Transverse colon (tissue), 4 donors: ENCODE measurements at regions of chr13 and their contacts with region 1.

Region 1: DNA sequence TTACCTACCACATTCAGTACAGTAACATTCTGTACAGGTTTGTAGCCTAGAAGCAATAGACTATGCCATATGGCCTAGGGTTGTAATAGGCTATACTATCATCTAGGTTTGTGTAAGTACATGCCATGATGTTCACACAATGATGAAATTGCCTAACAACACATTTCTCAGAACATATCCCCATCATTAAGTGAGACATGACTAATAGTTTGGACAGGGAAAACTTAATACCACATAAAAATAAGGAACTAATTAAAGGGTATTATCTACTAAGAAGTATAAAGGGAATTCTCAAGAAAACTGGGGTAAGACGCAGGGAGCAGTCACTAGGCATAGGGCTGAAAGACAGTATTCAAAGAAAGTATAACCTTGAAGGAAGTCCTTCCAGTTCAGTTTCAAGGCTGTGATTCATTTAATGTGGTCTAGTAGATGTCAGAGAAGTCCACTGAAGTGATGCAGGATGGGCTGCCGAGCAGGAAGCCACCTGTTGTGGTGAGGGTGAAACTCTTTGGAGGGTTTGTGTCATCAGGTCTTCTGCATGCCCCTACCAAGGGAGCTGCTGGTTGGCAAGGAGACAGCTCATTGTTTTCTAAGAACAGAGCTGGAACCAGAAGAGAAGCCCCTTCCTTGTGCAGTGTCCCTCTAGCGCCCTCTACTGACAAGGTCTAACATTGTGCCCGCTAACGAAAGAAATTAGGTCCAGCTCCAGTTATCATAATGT is 122.9 kb downstream of the OLFM4 start:
- DNase-seq: peak; percentile 44
- H3K4me3 ChIP-seq: no peak overlapping the region
- H3K27ac ChIP-seq: no peak overlapping the region
- H3K4me1 ChIP-seq: no peaks in the 10 kb centered on the region
- H3K27me3 ChIP-seq: peaks cover 4% of the 10 kb centered on the region
- CTCF ChIP-seq: peak; percentile 58 to 73 (median 68)
- EP300 ChIP-seq: no peak
- POLR2A ChIP-seq: no peak

Region 2: GRCh38 chr13:53112525-53112924 is 39.0 kb before region 1 on chr13:
- in situ Hi-C with region 1: no loop called
- intact Hi-C with region 1: loop called (anchors 2 kb)
- DNase-seq: no peak
- H3K4me3 ChIP-seq: no peak overlapping the region
- H3K27ac ChIP-seq: no peak overlapping the region
- H3K4me1 ChIP-seq: no peaks in the 10 kb centered on the region
- H3K27me3 ChIP-seq: no peaks in the 10 kb centered on the region
- CTCF ChIP-seq: no peak
- EP300 ChIP-seq: no peak
- POLR2A ChIP-seq: no peak

Region 3: GRCh38 chr13:53167561-53167960 is 16.1 kb after region 1 on chr13:
- in situ Hi-C with region 1: no loop called
- intact Hi-C with region 1: no loop called
- DNase-seq: no peak
- H3K4me3 ChIP-seq: no peak overlapping the region
- H3K27ac ChIP-seq: no peak overlapping the region
- H3K4me1 ChIP-seq: no peaks in the 10 kb centered on the region
- H3K27me3 ChIP-seq: no peaks in the 10 kb centered on the region
- CTCF ChIP-seq: no peak
- EP300 ChIP-seq: no peak
- POLR2A ChIP-seq: no peak

Region 4: DNA sequence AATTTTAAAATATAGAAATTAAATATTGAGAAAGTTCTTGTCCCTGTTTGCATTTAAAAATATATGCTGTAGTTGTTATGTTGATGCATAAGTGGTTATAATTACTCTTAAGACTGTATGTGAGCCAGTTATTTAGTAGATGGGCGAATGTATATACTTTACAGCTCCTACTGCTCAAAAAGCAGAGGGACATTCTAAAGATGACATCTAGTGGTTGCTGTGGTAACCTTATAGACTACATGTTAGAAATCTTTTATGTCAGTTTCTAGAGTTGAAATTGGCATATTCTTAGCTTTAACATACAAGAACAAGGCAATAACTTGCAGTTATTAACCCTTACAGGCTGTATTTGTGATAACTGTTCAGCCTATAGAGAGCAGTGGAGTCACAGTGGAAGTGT is 37.7 kb after region 1 on chr13:
- in situ Hi-C with region 1: no loop called
- intact Hi-C with region 1: loop called (anchors 2 kb)
- DNase-seq: no peak
- H3K4me3 ChIP-seq: no peak overlapping the region
- H3K27ac ChIP-seq: no peak overlapping the region
- H3K4me1 ChIP-seq: no peaks in the 10 kb centered on the region
- H3K27me3 ChIP-seq: no peaks in the 10 kb centered on the region
- CTCF ChIP-seq: no peak
- EP300 ChIP-seq: no peak
- POLR2A ChIP-seq: no peak